ENCODE measurements at regions of chr22 and their contacts with region 1.

Region 1: DNA sequence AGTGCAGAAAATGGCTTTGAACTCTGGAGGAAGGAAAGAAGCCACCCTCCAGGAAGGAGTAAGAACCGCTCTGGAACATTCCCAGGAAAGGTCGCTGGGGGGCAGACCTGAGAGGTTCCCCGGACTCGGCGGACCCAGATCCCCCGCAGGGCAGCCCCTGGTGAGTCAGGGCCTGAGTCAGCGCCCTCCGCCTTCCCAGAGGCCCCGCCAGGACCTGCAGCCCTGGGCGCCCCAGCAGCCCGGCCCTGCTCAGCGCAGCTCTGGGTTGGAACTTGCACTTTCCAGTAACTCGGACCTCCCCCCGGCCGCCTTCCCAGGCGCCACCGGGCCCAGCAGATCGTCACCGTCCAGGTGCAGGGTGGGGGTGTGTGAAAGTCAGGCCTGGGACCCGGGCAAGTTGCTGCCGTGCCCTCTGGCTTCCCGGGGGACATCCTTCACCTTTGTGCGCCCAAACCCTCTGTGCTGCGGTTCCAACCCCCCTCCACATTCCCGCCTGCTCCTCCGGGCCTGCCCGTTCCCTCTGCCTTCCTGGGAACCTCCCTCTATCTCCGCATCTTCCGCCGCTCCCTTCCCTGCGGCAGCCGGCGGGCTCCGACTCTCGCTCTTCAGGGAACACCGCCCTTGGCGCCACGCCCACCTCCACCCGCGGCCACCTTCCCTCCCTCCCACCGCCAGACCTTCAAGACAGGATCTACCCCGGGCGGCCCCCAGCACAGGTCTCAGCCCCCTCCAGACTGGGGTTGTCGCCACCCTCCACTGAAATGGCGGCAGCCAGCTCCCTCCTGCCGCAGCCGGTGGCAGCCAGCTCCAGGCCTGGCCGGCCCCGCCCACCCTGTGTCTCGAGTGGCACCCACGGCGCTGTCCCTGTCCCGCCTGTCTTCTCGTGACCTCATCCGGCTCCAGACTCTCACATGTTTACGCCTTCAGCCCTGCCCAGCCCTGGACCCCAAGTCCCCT is 36.8 kb upstream of the WNT7B start:
- DNase-seq: peak; percentile 75 to 95
- ATAC-seq: peak; percentile 96 to 98
- H3K4me3 ChIP-seq: peak overlapping the region; percentile 52
- H3K27ac ChIP-seq: peak overlapping the region; percentile 95 to 98
- H3K4me1 ChIP-seq: peaks cover 35% of the 10 kb centered on the region
- CTCF ChIP-seq: peak; percentile 61
- EP300 ChIP-seq: peak in 1 of 2 experiments; percentile 14; a peak in 1 of 5 replicates
- POLR2A ChIP-seq: peak; percentile 45
- RAD21 ChIP-seq: peak; percentile 53 to 70

Region 2: DNA sequence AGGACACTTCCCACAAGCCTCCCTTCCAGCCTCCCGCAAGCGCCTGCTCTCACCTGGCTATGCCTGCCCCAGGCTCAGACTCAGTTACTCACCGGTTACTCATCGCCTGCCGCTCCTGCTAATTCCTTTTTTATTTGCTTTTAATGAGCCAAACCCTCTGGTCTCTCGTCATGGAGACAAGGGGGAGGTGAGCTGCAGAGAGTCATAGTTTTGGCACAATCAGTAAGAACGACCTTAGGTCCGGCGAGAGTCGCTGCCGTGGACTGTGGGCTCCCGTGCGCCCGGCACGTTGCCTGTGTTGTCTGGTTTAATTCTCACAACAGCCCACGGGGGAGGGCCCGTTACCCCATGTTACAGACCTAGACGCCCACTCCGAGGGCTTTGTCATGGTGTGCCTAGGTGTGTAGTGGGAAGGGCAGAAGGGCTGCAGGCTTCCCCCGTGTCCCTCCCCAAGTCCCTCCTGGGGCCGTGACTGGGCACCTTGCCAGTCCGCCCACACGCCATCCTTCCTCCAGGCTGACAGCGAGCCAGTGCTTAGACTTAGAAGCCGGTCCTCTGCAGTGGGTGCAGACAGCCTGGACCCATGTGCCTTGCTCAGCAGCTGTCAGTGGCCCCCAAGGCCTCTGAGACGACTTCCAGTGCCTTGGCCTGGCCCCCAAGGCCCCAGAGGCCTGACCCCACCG is 78.9 kb before region 1 on chr22:
- CTCF ChIA-PET with region 1: no interaction called
- POLR2A ChIA-PET with region 1: no interaction called
- DNase-seq: peak; percentile 85 to 92
- ATAC-seq: peak; percentile 71 to 79
- H3K4me3 ChIP-seq: peak overlapping the region; percentile 34; the same call in 2 of the 3 replicates
- H3K27ac ChIP-seq: peak overlapping the region; percentile 89 to 92
- H3K4me1 ChIP-seq: peaks cover 66% of the 10 kb centered on the region
- CTCF ChIP-seq: no peak
- EP300 ChIP-seq: peak; percentile 52 to 68; a peak in 3 of 5 replicates
- POLR2A ChIP-seq: no peak
- RAD21 ChIP-seq: 0 out of 5 replicates have a peak, but pooled peaks of 1 of the 2 experiments have one; percentile 16

Region 3: GRCh38 chr22:45952151-45952550 is 61.6 kb before region 1 on chr22:
- CTCF ChIA-PET with region 1: no interaction called
- POLR2A ChIA-PET with region 1: no interaction called
- DNase-seq: no peak
- ATAC-seq: no peak
- H3K4me3 ChIP-seq: no peak overlapping the region
- H3K27ac ChIP-seq: peak overlapping the region in 1 of 2 experiments; percentile 54; a peak in 3 of 6 replicates
- H3K4me1 ChIP-seq: peaks cover 87% of the 10 kb centered on the region
- CTCF ChIP-seq: no peak
- EP300 ChIP-seq: no peak
- POLR2A ChIP-seq: no peak
- RAD21 ChIP-seq: no peak

Region 4: DNA sequence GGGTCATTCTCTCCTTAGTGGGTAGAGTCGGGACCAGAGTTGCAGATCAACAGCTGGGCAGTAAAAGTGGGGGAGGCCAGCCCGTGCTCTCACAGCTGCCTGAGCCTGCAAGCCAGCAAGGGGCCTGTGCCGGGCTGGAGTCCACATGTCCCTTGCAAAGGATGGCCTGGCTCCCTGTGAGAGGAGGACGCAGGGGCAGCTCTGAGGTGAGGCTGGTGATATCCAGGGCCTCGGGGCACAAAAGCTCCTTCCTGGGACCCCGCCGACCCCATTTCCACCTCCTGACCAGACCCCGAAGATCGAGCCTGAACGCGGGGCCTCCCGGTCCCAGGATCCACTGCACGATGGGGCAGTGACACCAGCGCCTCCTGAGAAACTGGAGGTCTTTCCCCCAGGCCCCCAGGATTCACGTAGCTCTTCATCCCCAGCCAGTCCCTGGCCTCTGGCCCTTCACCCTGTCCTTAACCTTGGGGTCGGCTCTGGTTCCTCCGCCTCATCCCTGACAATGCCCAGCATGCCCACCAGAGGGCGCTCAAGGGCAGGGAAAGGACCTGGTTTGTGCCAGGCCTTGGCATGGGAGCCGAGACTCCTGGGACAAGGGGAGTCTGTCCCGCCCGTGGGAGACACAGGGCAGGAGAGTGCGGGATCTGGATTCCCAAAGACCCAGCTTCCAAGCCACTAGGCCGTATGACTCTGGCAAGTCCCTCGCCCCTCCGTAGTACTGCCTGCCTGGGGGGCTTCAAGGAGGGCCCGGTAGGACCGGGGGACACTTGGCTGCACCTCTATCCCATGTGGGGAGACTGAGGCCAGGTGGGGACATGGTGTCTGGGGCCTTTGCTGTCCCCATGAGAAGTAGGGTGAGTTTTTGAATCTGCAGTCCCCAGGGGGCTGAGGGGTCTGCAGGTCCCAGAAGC is 19.0 kb before region 1 on chr22:
- CTCF ChIA-PET with region 1: interaction called, 52 read pairs
- POLR2A ChIA-PET with region 1: no interaction called
- DNase-seq: peak; percentile 49 to 55
- ATAC-seq: peak; percentile 74 to 90
- H3K4me3 ChIP-seq: no peak overlapping the region
- H3K27ac ChIP-seq: peak overlapping the region; percentile 51 to 72; a peak in 4 of 6 replicates
- H3K4me1 ChIP-seq: no peaks in the 10 kb centered on the region
- CTCF ChIP-seq: peak; percentile 75
- EP300 ChIP-seq: no peak
- POLR2A ChIP-seq: no peak
- RAD21 ChIP-seq: peak; percentile 88 to 93

Region 5: DNA sequence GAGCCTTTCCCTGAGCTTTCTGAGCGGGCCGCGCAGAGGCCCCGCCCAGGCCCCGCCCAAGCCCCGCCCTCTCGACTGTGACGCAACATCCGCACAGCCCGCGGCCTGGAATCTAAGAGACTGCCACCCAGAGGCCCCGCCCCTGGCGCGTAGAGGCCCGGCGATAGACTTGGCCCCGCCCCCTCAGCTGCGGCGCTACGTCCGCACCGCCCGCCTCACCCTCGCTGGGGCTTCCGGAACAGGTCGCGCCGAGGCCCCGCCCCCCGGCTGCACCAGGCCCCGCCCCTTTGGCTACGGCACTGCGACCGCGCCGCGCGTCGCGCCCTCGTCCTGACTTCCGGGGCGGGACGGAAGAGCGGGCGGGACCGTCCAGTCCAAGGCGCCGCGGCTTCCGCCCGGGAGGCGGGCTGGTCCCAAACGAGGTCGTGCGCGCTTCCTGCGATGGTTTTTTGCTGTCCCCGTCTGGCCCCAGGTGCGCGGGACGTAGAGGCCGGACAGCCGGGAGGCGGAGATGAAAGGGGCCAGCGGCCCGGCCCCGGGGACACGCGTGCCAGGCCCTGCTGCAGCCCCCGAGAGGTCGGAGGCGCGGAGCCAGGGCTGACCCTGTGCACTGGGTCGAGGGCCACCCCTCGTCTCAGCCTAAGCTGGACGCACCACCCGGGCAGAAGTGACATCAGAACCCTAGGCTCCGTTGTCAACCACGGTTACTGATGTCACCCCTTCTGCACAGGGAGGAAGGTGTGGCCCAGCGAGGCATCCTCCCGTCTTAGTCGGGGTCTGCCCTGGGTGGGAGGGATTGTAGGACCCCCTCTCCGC is 22.2 kb after region 1 on chr22:
- CTCF ChIA-PET with region 1: interaction called, 66 read pairs
- POLR2A ChIA-PET with region 1: interaction called, 63 read pairs
- DNase-seq: peak; percentile 87 to 98
- ATAC-seq: peak; percentile 90 to 94
- H3K4me3 ChIP-seq: peak overlapping the region; percentile 82
- H3K27ac ChIP-seq: peak overlapping the region; percentile 92 to 95
- H3K4me1 ChIP-seq: peaks cover 15% of the 10 kb centered on the region
- CTCF ChIP-seq: no peak
- EP300 ChIP-seq: no peak
- POLR2A ChIP-seq: peak; percentile 68
- RAD21 ChIP-seq: no peak

Region 6: GRCh38 chr22:46054091-46055073 is 40.6 kb after region 1 on chr22:
- CTCF ChIA-PET with region 1: interaction called, 48 read pairs
- POLR2A ChIA-PET with region 1: interaction called, 10 read pairs
- DNase-seq: no peak
- ATAC-seq: peak; percentile 58 to 71; a peak in 5 of 6 replicates
- H3K4me3 ChIP-seq: peak overlapping the region; percentile 61
- H3K27ac ChIP-seq: peak overlapping the region; percentile 99
- H3K4me1 ChIP-seq: peaks cover 43% of the 10 kb centered on the region
- CTCF ChIP-seq: no peak
- EP300 ChIP-seq: no peak
- POLR2A ChIP-seq: no peak
- RAD21 ChIP-seq: no peak

Region 7: DNA sequence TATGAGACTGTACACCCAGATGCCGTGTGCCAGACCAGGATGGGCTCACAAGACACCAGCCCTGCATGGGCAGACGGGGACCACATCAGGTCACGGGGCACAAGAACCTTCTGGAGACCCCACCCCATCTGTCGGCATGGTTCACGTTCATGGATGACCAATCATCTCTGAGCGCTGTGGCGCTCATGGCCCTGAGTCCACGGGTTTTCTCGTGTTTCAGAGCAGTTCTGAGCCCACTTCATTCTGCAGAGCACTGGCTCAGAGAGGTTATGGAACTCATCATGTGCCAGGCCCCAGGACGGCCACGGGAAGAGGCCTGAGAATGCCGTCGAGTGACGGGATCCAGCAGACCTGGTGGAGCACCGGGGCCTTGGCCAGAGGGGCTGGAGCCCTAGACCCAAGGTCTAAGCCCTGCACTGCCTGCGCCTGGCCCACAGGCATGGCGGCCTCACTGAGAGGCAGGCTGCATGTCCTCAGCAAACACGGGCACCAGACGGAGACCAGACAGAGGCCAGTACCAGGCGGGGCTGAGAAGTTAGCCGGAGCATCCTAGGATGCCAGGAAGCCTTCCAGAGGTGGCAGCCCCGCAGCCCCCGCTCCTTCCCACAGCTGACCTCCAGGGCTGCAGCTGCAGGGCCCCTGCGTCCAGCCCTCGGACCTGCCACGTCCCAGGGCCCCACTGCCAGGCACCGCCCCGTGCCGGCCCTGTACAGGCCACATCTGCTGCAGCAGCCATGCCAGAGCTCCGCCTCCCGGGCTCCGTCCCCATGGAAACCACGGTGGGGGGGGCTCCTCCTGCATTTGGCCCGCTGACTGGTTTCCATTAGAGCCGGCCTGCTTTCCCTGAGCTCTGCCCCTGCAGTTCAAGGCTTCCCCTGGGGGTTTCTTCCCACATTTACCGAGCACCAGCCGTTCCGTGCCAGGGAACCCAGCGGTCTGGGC is 73.9 kb after region 1 on chr22:
- CTCF ChIA-PET with region 1: interaction called, 12 read pairs
- POLR2A ChIA-PET with region 1: interaction called, 4 read pairs
- DNase-seq: peak in 1 of 2 experiments; percentile 67
- ATAC-seq: peak; percentile 14 to 46; a peak in 4 of 6 replicates
- H3K4me3 ChIP-seq: peak overlapping the region; percentile 52
- H3K27ac ChIP-seq: peak overlapping the region; percentile 99 to 100
- H3K4me1 ChIP-seq: peaks cover 84% of the 10 kb centered on the region
- CTCF ChIP-seq: no peak
- EP300 ChIP-seq: no peak
- POLR2A ChIP-seq: no peak
- RAD21 ChIP-seq: no peak

Region 8: DNA sequence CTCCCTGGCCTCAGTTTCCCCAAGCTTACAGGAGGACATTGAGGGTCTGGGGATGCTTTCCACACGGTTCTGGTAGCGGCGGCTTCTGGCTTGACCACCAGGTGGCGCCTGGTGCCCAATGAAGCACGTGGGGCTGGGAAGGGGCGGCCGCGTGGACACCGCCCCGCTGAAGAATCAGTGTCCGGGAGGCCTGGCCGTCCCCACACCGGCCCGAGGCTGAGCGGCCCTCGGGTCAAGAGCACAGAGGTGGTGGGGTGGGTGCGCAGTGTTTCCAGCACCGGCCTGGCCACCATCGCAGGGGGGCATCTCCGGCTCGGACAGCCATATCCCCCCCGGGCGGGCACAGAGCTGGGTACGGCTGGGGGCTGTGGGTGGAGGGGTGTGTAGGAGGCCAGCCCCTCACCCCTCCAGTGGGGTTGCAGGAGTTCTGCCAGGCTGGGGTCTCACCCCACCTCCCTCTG is 108.8 kb after region 1 on chr22:
- CTCF ChIA-PET with region 1: interaction called, 108 read pairs
- POLR2A ChIA-PET with region 1: no interaction called
- DNase-seq: peak in 1 of 2 experiments; percentile 76
- ATAC-seq: peak; percentile 47 to 74
- H3K4me3 ChIP-seq: no peak overlapping the region
- H3K27ac ChIP-seq: peak overlapping the region; percentile 59 to 85; a peak in 5 of 6 replicates
- H3K4me1 ChIP-seq: 0 out of 3 replicates have a peak, but pooled peaks cover 4% of the 10 kb centered on the region
- CTCF ChIP-seq: peak; percentile 76
- EP300 ChIP-seq: no peak
- POLR2A ChIP-seq: no peak
- RAD21 ChIP-seq: peak; percentile 77 to 84

Region 9: DNA sequence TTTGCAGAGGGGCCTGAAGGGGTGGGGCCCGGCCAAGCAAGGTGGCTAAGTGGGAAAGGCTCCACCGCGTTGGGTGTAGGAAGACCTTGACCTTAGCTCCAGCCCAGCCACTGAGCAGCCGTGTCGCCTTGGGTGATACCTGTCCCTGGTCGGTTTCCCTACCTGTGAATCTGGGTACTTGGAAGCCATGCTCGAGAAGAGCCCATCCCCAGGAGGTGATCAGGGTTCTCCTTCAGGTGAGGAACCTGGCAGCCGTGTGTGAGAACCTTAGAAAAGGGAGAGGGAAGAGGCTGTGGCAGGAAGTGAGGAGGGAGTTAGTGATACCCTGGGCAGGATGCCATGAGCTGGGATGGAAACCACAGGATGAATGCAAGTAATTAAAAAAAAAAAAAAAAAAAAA is 158.2 kb after region 1 on chr22:
- CTCF ChIA-PET with region 1: no interaction called
- POLR2A ChIA-PET with region 1: no interaction called
- DNase-seq: no peak
- ATAC-seq: no peak
- H3K4me3 ChIP-seq: no peak overlapping the region
- H3K27ac ChIP-seq: peak overlapping the region; percentile 62 to 84
- H3K4me1 ChIP-seq: peaks cover 29% of the 10 kb centered on the region
- CTCF ChIP-seq: no peak
- EP300 ChIP-seq: no peak
- POLR2A ChIP-seq: no peak
- RAD21 ChIP-seq: no peak